Activated naive CD8-positive, alpha-beta T cell treated with anti-CD3 and anti-CD28 coated beads, Interleukin-2, amount 10 ng/mL, durations not matched to agents 7 days and 5 days (primary cell): ENCODE measurements at regions of chr1 and their contacts with region 1.

Region 1: DNA sequence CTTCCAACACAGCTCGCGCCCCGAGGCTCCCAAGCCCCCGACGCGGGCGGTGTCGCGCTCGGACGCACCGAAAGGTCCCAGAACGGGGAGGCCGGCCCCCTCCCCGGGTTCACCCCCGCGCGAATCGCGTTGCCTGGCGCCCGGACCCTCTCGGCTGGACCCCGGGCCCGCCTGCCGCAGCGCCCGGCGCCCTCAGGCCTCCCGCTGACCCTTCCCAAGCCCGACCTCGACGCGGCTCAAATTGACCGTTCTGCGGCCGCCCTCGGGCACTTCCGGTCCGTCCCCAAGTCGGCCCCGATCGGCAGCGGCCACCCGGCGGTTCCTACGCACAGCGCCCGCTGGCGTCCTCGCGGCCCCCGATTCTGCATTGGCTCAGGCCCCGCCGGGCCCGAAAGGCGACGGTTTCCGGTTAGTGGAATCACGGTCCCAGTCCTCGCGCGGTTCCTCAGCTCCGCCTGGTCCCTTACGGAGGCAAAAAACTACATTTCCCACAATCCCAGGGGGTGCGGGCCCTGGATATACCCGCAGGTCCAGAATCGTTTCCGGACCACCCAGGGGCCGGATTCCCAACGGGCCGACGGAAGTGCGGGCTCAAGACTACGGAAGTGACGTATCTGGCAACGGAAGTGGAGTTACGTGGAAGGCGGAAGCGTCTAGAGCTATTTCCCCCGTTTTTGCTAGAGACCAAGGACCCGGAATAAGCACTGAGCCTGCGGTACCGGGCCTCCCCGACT is at the start of gene AURKAIP1:
- DNase-seq: peak; percentile 89
- ATAC-seq: peak; percentile 87
- H3K4me3 Mint-ChIP-seq: peak within 1 kb of the TSS; percentile 91
- H3K27ac Mint-ChIP-seq: peak within 1 kb of the TSS; percentile 95
- H3K4me1 Mint-ChIP-seq: peaks cover 13% of the 10 kb centered on the region
- H3K27me3 Mint-ChIP-seq: no peaks in the 10 kb centered on the region
- total RNA-seq, gene AURKAIP1: 87.3 to 97.1 TPM

Region 2: GRCh38 chr1:1298861-1299685 is 76.0 kb before region 1 on chr1:
- POLR2A ChIA-PET with region 1: no interaction called
- DNase-seq: no peak
- ATAC-seq: peak; percentile 13
- H3K4me3 Mint-ChIP-seq: no peak overlapping the region
- H3K27ac Mint-ChIP-seq: no peak overlapping the region
- H3K4me1 Mint-ChIP-seq: no peaks in the 10 kb centered on the region
- H3K27me3 Mint-ChIP-seq: no peaks in the 10 kb centered on the region

Region 3: DNA sequence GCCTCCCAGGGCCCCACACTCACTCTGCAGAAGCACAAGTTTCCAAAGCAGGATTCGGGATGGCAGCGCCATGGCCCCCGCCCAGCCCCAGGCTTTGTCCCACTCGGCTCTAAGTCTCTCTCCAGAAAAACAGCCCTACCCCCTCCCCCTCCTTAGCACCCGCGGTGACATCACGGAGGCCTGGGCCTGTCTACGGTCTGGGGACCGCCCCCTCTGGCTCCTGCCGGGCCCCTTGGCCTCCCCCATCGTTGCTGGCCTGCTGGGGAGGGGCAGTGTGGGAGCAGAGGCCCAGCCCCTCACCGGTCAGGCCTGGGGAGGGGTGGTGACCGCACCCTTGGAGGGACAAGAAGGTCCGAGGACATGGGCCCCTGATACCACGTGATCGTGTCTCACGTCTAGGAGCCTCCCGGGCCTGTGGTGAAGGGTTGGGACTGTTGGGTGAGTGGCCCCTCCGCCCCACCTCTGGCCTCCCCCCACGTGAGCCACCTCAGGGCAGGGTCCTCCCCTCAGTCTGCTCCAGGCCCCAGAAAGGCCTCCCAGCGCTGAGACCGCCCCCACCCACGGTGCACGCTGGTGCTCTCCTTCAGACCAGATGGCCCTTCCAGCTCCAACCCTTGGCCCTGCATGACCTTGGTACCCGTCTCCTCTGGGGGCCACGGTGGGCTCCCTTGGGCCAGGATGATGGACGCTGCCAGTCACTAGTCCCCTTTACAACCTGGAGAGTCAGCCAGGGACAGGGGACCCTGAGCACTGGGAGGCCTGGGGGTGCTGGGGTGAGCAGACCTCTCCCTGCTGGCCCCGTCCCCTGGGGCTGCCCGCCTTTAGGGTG is 16.4 kb before region 1 on chr1 and contains the start of gene MXRA8:
- POLR2A ChIA-PET with region 1: interaction called, 11 read pairs
- DNase-seq: no peak
- ATAC-seq: no peak
- H3K4me3 Mint-ChIP-seq: no peak within 1 kb of the TSS
- H3K27ac Mint-ChIP-seq: peak within 1 kb of the TSS; percentile 32
- H3K4me1 Mint-ChIP-seq: peaks cover 12% of the 10 kb centered on the region
- H3K27me3 Mint-ChIP-seq: peaks cover 18% of the 10 kb centered on the region
- total RNA-seq, gene MXRA8: 0.51 to 1.2 TPM

Region 4: DNA sequence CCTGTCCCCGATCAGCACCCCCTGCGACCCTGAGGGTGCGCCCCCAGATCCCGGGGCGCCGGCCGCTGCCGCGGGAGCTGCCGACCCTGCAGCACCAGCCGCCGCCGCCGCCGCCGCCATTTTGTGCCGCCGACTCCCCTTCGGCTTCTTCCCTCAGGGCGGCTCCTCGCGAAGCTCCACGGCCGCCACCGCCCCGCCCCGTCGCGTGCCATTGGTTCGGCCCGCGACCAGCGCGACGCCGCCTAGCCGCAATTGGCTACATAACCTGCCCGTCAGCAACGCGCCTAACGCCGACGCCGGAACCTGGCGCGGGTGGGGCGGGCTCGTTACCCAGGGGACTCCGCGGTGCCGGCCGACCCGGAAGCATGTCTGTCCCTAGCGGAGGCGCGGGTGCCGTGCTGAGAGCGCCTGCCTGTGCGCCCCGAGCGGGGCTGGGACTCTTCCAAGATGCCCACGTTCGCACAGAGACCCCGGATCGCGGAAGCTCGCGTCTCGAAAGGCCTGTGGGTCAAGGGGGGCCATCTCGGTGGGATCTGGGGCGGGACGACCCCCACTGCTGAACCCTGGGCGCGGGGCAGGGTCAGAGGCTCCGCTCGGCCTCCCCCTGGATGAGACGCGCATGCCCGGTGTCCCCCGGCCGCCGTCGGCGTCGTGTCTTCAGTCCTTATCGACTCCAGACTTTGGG is 24.2 kb after region 1 on chr1 and contains the start of gene CCNL2:
- POLR2A ChIA-PET with region 1: interaction called, 45 read pairs
- DNase-seq: peak; percentile 100
- ATAC-seq: peak; percentile 97
- H3K4me3 Mint-ChIP-seq: peak within 1 kb of the TSS; percentile 89
- H3K27ac Mint-ChIP-seq: peak within 1 kb of the TSS; percentile 87
- H3K4me1 Mint-ChIP-seq: peaks cover 29% of the 10 kb centered on the region
- H3K27me3 Mint-ChIP-seq: no peaks in the 10 kb centered on the region
- total RNA-seq, gene CCNL2: 201 to 211 TPM

Region 5: DNA sequence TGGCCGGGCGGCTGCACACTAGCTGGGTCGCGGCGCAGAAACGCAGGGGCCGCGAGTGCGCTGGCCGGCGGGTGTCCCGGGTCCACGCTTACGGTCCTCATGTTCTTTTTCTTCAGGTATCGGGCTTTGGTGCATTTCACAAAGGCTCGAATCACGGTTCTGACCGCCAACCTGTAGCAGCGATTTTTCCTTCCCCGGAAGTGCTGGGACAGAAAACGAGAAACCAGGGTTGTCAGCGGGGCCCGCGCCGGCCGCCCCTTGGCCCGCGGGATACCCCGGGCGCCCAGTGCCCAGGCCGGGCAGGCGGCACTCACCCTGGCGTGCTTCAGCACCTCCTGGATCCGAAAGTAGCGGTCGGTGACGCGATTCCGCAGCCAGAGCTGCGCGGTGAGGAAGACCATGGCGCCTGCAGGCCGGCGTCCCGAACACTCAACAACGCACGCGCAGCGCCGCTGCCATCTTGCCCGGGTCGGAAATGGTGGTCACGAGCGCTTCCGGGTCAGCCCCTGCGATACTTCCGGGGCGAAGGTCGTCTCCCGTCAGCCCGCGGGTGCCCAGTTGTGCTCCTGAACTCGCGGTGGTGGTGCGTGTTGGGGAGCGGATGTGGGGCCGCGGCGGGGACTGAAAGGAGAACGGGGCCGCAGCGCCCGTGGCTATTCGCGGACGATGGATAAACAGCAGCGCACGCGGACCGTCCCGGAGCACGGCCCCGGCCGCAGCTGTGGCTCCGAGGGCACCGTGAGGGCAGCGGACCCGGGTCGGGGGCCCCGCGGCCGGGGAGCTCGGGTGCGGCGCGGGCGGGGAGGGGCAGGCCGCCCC is 31.9 kb after region 1 on chr1 and contains the start of gene MRPL20:
- POLR2A ChIA-PET with region 1: interaction called, 32 read pairs
- DNase-seq: peak; percentile 95
- ATAC-seq: peak; percentile 94
- H3K4me3 Mint-ChIP-seq: peak within 1 kb of the TSS; percentile 93
- H3K27ac Mint-ChIP-seq: peak within 1 kb of the TSS; percentile 95
- H3K4me1 Mint-ChIP-seq: peaks cover 23% of the 10 kb centered on the region
- H3K27me3 Mint-ChIP-seq: no peaks in the 10 kb centered on the region
- total RNA-seq, gene MRPL20: 98.6 to 101 TPM